PC-3 (cell line): ENCODE measurements at regions of chr20 and their contacts with region 1.

Region 1: GRCh38 chr20:13119583-13119982 is 101.5 kb upstream of the ISM1 start:
- DNase-seq: peak; percentile 87
- ATAC-seq: peak; percentile 88
- H3K4me3 ChIP-seq: no peak overlapping the region
- H3K27ac ChIP-seq: no peak overlapping the region
- H3K4me1 ChIP-seq: no peaks in the 10 kb centered on the region
- H3K27me3 ChIP-seq: no peaks in the 10 kb centered on the region
- CTCF ChIP-seq: peak; percentile 97

Region 2: DNA sequence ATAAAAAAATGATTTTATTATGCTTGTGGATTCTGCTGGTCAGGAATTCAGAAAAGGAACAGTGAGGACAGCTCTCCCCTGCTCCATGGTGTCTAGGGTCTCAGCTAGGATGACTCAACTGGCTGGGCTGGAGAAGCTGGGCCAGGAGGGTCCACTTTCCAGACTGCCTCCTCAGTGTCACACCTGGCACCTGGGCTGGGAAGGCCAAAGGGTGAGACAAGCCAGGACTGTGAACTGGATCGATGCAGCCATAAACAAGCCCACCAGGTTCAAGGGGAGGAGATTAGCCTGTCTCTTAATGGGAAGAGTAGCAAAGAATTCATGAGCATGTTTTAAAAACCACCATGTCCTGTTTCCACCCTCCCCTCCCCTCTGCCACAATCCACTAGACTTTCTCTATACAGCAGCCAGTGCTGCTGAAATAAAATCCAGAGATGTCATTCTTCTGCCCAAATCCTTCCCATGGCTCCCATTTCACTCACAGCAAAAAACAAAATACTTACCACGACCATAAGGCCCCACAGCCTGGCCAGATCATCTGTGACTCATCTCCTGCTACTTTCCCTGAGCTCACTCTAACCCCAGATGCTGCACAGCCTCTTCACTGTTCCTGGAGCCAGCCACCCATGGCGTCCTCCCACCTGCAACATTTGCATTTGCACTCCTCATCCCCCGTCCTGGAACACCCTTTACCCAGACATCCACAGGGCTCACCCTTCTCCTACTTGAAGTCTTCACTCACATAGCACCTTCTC is 97.0 kb before region 1 on chr20:
- CTCF ChIA-PET with region 1: no interaction called
- POLR2A ChIA-PET with region 1: no interaction called
- intact Hi-C with region 1: no loop called
- DNase-seq: peak; percentile 91
- ATAC-seq: peak; percentile 66
- H3K4me3 ChIP-seq: peak overlapping the region; percentile 3; the same call in 1 of the 2 replicates
- H3K27ac ChIP-seq: peak overlapping the region; percentile 92
- H3K4me1 ChIP-seq: peaks cover 43% of the 10 kb centered on the region
- H3K27me3 ChIP-seq: no peaks in the 10 kb centered on the region
- CTCF ChIP-seq: no peak

Region 3: GRCh38 chr20:13261460-13262301 is 142.1 kb after region 1 on chr20:
- CTCF ChIA-PET with region 1: interaction called, 3 read pairs
- POLR2A ChIA-PET with region 1: no interaction called
- intact Hi-C with region 1: loop called (anchors 1 kb)
- DNase-seq: peak; percentile 76
- ATAC-seq: peak; percentile 87
- H3K4me3 ChIP-seq: no peak overlapping the region
- H3K27ac ChIP-seq: no peak overlapping the region
- H3K4me1 ChIP-seq: peaks cover 15% of the 10 kb centered on the region
- H3K27me3 ChIP-seq: peaks cover 10% of the 10 kb centered on the region
- CTCF ChIP-seq: peak; percentile 95

Region 4: DNA sequence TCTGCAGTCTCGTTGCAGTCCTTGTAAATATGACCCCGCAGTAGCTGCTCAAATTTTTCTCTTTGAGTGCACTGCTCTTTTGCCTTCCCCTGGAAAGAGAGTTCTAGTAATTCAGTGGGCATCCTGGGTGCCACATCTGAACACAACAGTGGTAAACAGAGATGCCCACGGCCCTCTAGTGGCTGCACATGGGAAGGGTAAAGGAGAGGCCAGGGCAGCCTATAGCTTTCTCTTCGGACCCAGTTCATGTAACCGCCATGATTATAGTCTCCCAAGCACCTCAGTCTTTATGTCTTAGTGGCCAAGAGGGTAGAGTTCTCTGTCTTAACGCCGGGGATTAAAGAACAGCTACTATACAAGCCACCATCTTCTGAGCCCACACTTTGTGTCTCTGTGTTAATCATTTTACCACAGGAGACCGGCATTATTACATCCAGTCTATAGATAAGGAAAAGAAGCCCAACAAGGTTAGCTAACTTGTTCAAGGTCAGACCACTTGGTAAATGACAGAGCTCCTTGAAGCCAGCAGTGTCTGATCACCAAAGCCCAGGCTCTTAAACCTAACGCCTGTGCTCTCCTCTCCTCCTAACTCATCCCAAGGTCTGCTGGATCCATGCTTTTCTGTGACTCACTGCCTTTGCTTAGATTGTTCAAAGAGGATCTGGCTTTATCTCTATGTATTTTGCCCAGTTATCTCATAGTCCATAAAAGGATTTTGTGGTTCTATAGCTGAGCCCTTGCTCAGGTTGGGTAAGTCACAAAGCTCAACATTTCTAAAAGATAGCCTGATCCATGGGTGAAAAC is 183.3 kb after region 1 on chr20:
- CTCF ChIA-PET with region 1: interaction called, 6 read pairs
- POLR2A ChIA-PET with region 1: no interaction called
- intact Hi-C with region 1: loop called (anchors 1 kb)
- DNase-seq: peak; percentile 73
- ATAC-seq: peak; percentile 97
- H3K4me3 ChIP-seq: no peak overlapping the region
- H3K27ac ChIP-seq: no peak overlapping the region
- H3K4me1 ChIP-seq: no peaks in the 10 kb centered on the region
- H3K27me3 ChIP-seq: peaks cover 25% of the 10 kb centered on the region
- CTCF ChIP-seq: peak; percentile 94

Region 5: DNA sequence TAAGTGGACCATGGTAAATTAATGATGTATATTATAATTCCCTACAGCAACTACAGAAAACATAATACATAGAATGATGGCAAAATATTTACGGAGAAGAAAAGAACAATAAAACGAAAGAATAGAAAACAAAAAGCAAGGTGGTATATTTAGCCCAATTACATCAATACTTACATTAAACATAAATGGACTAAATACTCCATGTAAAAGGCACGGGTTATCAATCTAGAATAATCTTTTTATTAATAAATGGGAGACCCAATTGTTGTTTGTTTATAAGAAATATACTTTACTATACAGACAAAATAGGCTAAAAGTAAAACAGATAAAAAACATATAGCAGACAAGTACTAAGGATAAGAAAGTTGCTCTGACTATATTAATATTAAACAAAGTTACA is 381.9 kb after region 1 on chr20:
- CTCF ChIA-PET with region 1: no interaction called
- POLR2A ChIA-PET with region 1: no interaction called
- intact Hi-C with region 1: no loop called
- DNase-seq: no peak
- ATAC-seq: no peak
- H3K4me3 ChIP-seq: no peak overlapping the region
- H3K27ac ChIP-seq: no peak overlapping the region
- H3K4me1 ChIP-seq: no peaks in the 10 kb centered on the region
- H3K27me3 ChIP-seq: no peaks in the 10 kb centered on the region
- CTCF ChIP-seq: no peak

Region 6: DNA sequence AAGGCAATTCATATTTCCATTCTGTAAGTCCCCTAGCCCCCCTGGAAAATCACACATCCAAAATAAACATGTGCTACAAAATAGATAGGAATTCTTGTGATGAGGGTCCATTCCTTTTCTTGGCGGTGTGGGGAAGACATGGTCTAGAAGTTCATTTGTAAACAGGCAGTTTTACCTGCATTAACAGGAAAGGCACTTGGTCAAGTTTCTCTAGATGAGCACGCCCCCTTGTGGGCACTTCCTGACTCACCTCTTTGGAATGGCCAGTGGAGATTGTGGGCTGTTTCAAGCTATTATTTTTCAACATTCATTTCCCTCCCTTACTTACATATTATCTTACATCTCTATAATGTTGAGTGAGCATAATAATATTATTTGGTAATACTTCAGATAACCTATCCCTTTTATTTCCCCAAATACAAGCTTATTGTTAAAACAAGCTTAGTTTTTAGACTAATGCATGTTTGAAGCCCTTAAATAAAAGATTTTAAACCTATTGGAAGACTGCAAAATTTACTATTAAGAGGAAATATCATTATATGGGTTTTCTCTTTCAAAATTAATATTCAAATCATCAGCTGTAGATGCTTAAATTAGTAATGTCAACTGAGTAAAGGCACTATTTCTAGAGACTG is 427.0 kb after region 1 on chr20:
- CTCF ChIA-PET with region 1: no interaction called
- POLR2A ChIA-PET with region 1: no interaction called
- intact Hi-C with region 1: loop called (anchors 1 kb)
- DNase-seq: peak; percentile 93
- ATAC-seq: peak; percentile 88
- H3K4me3 ChIP-seq: no peak overlapping the region
- H3K27ac ChIP-seq: no peak overlapping the region
- H3K4me1 ChIP-seq: peaks cover 7% of the 10 kb centered on the region
- H3K27me3 ChIP-seq: no peaks in the 10 kb centered on the region
- CTCF ChIP-seq: peak; percentile 92

Region 7: GRCh38 chr20:13771853-13772453 is 652.4 kb after region 1 on chr20:
- CTCF ChIA-PET with region 1: no interaction called
- POLR2A ChIA-PET with region 1: no interaction called
- intact Hi-C with region 1: loop called (anchors 5 kb)
- DNase-seq: peak; percentile 72
- ATAC-seq: no peak; the same call in 1 of the 2 replicates
- H3K4me3 ChIP-seq: no peak overlapping the region
- H3K27ac ChIP-seq: no peak overlapping the region
- H3K4me1 ChIP-seq: no peaks in the 10 kb centered on the region
- H3K27me3 ChIP-seq: no peaks in the 10 kb centered on the region
- CTCF ChIP-seq: peak; percentile 76